PC-9 (cell line): ENCODE measurements at regions of chr2 and their contacts with region 1.

Region 1: GRCh38 chr2:171109571-171109970 is 51.1 kb downstream of the TLK1 start:
- DNase-seq: no peak
- H3K4me3 ChIP-seq: no peak overlapping the region
- H3K27ac ChIP-seq: no peak overlapping the region
- H3K4me1 ChIP-seq: no peaks in the 10 kb centered on the region
- H3K27me3 ChIP-seq: no peaks in the 10 kb centered on the region
- CTCF ChIP-seq: no peak

Region 2: GRCh38 chr2:171086352-171087290 is 22.9 kb before region 1 on chr2:
- CTCF ChIA-PET with region 1: no interaction called
- POLR2A ChIA-PET with region 1: no interaction called
- intact Hi-C with region 1: loop called (anchors 2 kb)
- DNase-seq: peak; percentile 52 to 59
- H3K4me3 ChIP-seq: no peak overlapping the region
- H3K27ac ChIP-seq: no peak overlapping the region
- H3K4me1 ChIP-seq: no peaks in the 10 kb centered on the region
- H3K27me3 ChIP-seq: no peaks in the 10 kb centered on the region
- CTCF ChIP-seq: peak; percentile 84